PC-3 (cell line): ENCODE measurements at regions of chr19 and their contacts with region 1.

Region 1: DNA sequence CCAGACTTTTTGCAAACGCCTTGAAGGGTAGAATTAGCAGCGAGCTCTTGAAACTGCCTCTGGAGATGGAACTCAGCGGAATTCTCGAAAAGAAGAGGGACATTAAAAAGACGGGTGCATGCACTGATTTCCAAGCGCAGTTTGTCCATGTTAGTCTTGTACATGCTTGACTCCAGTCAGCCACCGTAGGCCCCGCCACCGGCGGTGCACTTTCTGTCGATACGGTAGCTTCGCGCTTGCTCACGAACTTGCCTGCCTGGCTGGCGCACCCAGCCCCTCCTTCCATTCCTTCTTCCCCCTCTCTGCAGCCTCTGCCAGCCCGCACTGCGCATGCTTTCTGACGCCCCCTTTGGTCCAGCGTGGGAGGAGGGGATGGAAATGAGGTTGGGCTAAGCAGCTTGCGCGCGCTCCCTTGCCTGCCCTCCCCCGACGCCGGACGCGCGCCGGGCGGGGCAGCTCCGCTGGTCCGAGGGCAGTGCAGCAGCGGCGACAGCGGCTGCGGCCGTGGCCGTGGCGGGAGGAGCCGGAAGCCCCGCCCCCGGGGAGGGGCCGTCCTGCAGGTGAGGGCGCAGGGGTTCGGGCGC is at the start of gene ZNF575:
- DNase-seq: peak; percentile 88
- ATAC-seq: peak; percentile 66
- H3K4me3 ChIP-seq: peak within 1 kb of the TSS; percentile 69
- H3K27ac ChIP-seq: peak within 1 kb of the TSS; percentile 67
- H3K4me1 ChIP-seq: peaks cover 13% of the 10 kb centered on the region
- H3K27me3 ChIP-seq: no peaks in the 10 kb centered on the region
- CTCF ChIP-seq: no peak
- total RNA-seq, gene ZNF575: 0.98 TPM in 1 of 2 replicates, not detected in the other

Region 2: DNA sequence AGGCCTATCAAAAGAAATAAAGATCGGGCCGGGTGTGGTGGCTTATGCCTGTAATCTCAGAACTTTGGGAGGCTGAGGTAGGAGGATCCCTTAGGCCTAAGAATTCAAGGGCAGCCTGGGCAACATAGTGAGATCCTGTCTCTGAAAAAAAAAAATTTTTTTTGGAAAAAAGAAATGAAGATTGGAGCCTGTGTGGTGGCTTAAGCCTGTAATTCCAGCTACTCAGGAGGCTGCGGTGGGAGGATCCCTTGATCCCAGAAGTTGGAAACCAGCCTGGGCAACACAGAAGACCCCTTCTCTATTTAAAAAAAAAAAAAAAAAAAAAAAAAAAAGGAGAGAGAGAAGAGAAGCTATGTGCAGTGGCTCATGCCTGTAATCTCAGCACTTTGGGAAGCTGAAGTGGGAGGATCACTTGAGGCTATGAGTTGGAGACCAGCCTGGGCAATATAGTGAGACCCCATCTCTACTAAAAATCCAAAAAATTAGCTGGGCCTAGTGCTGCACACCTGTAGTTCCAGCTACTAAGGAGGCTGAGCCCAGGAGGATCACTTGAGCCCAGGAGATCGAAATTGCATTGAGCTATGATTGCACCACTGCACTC is 53.0 kb before region 1 on chr19:
- CTCF ChIA-PET with region 1: no interaction called
- POLR2A ChIA-PET with region 1: interaction called, 12 read pairs
- intact Hi-C with region 1: no loop called
- DNase-seq: no peak
- ATAC-seq: no peak
- H3K4me3 ChIP-seq: no peak overlapping the region
- H3K27ac ChIP-seq: no peak overlapping the region
- H3K4me1 ChIP-seq: peaks cover 9% of the 10 kb centered on the region; the same call in 1 of the 2 replicates
- H3K27me3 ChIP-seq: no peaks in the 10 kb centered on the region
- CTCF ChIP-seq: no peak

Region 3: GRCh38 chr19:43507880-43508279 is 25.2 kb before region 1 on chr19:
- CTCF ChIA-PET with region 1: no interaction called
- POLR2A ChIA-PET with region 1: no interaction called
- intact Hi-C with region 1: no loop called
- DNase-seq: no peak
- ATAC-seq: no peak
- H3K4me3 ChIP-seq: no peak overlapping the region
- H3K27ac ChIP-seq: no peak overlapping the region
- H3K4me1 ChIP-seq: 0 out of 2 replicates have a peak, but pooled peaks cover 8% of the 10 kb centered on the region
- H3K27me3 ChIP-seq: no peaks in the 10 kb centered on the region
- CTCF ChIP-seq: no peak

Region 4: GRCh38 chr19:43517752-43518450 is 15.2 kb before region 1 on chr19:
- CTCF ChIA-PET with region 1: no interaction called
- POLR2A ChIA-PET with region 1: no interaction called
- intact Hi-C with region 1: no loop called
- DNase-seq: no peak
- ATAC-seq: no peak
- H3K4me3 ChIP-seq: no peak overlapping the region
- H3K27ac ChIP-seq: no peak overlapping the region
- H3K4me1 ChIP-seq: peaks cover 4% of the 10 kb centered on the region; the same call in 1 of the 2 replicates
- H3K27me3 ChIP-seq: no peaks in the 10 kb centered on the region
- CTCF ChIP-seq: no peak

Region 5: DNA sequence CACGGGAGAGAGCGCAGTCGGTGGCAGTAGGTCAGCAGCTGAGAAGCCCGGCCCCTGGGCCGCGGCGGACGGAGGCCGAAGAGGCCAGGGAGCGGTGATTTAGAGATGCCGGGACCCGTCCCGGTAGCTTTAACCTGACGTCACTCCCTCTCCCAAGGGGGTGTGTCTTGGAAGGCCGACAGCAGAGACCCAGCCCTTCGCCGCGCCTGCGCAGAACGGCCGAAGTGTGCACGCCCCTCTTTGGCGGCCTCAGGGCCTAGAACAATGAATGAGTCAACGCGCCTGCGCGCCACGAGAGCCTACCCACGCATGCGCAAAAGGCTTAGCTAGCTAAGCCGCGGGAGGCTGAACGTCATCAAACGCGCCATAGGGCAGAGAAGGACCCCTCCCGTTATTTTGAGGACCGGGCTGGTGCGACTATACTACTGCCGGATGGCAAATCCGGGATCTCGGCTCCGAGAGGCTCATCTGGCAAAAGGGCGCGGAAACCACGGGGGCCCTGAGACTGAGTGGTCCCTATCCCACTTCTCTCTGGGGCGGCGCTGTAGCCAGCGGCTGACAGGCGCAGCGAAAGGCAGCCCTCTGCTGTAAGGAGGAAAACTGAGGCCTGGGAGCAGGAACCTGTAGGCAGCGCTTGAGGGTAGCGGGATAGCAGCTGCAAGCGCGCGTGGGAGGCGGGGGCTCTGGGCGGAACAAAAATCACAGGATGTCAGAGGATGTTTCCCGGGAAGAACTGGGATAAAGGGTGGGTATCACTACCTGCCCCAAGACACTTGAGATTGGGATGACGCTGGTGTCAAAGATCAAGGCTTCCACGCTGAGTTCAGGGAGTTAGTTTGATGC is 63.2 kb after region 1 on chr19 and contains the starts of genes IRGQ and ZNF576:
- CTCF ChIA-PET with region 1: interaction called, 3 read pairs
- POLR2A ChIA-PET with region 1: no interaction called
- intact Hi-C with region 1: loop called (anchors 2 kb)
- DNase-seq: peak; percentile 99
- ATAC-seq: peak; percentile 75
- H3K4me3 ChIP-seq: peak within 1 kb of the TSS; percentile 78
- H3K27ac ChIP-seq: peak within 1 kb of the TSS; percentile 80
- H3K4me1 ChIP-seq: peaks cover 14% of the 10 kb centered on the region
- H3K27me3 ChIP-seq: no peaks in the 10 kb centered on the region
- CTCF ChIP-seq: no peak
- total RNA-seq, gene IRGQ: 12.5 and 12.9 TPM in 2 replicates
- total RNA-seq, gene ZNF576: 10.9 and 14.7 TPM in 2 replicates